B cell (primary cell): ENCODE measurements at regions of chr16 and their contacts with region 1.

Region 1: DNA sequence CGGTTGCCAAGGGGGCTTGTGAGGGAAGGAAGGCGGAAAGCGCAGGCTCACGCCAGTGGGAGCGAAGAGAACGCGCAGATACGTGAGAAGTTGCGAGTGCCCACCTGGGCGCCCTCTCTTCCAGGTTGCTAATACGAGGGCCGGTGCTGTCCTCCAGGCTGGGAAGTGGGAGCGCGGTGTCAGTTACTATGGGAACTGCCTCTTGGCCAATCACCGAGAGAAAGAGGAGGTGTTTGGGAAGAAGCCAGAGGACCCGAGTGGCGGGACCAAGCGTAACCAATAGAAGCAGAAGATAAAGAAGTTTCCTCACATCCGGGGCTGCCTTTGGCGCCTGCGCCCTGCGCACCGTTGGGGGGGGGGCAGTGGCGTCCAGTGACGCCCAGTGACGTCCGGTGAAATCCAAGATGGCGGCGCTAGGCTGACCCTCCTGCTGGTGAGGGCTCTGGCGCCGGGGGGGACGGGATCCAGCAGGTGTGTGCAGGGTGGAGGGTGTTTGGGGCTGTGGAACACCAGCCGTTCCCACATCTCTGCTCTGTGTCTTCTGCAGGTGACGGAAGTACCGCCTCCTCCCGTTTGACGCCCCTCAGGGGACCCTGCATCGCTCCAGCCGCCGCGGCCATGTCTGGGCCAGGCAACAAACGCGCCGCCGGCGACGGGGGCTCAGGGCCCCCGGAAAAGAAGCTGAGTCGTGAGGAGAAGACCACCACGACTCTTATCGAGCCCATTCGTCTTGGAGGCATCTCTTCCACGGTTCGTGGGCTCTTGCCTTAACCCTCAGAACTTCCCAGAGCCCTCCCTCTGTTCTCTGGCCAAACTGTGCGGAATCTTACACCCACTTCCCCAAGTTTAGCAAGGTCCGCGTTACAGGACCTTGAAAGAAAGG is at the starts of genes CFAP119 and RNF40:
- DNase-seq: peak; percentile 95
- ATAC-seq: peak; percentile 92
- H3K4me3 ChIP-seq: peak within 1 kb of the TSS; percentile 82 to 93 (median 90)
- H3K4me3 Mint-ChIP-seq: peak within 1 kb of the TSS; percentile 98
- H3K27ac ChIP-seq: peak within 1 kb of the TSS; percentile 57 to 91
- H3K27ac Mint-ChIP-seq: peak within 1 kb of the TSS; percentile 95
- H3K4me1 ChIP-seq: peaks cover 24 to 37% of the 10 kb centered on the region in 2 donors
- H3K4me1 Mint-ChIP-seq: peaks cover 36% of the 10 kb centered on the region
- H3K27me3 ChIP-seq: no peaks in the 10 kb centered on the region
- H3K27me3 Mint-ChIP-seq: no peaks in the 10 kb centered on the region
- CTCF ChIP-seq: no peak
- total RNA-seq, gene CFAP119: 9.3 and 11.7 TPM in 2 replicates
- total RNA-seq, gene RNF40: 120 and 121 TPM in 2 replicates

Region 2: DNA sequence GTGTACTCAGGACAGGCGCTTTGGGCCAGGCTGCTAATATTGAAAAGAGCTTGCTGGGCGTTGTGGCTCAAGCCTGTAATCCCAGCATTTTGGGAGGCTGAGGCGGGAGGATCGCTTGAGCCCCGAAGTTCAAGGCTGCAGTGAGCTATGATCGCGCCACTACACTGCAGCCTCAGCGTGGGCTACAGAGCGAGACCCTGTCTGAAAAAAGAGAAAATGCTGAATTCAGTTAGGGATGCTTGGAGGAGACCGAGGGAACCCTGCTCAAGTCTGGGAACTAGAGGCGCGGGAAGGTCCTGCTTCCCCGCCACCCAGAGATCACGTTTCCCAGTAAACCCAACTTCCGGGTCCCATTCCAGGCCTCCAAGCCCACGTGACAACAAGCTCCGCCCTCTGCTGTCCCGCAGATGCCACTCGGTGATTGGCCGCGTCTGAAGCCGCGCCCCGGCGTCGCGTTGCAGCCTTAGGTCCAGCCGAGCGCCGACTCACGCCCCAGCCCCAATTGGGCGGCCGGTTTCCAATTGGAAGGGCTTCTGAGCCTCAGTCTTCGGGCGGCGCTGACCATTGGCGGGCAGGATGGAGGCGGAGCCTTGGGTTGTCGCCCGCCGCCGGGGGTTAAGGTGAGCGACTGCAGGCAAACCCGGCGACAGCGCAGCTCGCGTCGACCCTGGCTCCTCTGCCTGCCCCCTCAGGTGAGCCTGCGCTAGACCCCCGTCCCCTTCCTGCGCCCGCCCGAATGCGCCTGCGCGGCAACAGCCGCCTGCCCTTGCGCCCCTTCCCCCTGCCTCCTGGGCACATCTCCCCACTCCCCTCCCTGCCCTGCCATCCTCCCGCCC is 14.2 kb before region 1 on chr16 and contains the start of gene PHKG2:
- CTCF ChIA-PET with region 1: no interaction called
- POLR2A ChIA-PET with region 1: interaction called, 9 read pairs
- intact Hi-C with region 1: loop called (anchors 1 kb)
- DNase-seq: peak; percentile 98
- ATAC-seq: peak; percentile 99
- H3K4me3 ChIP-seq: peak within 1 kb of the TSS; percentile 22 to 84 (median 69)
- H3K4me3 Mint-ChIP-seq: peak within 1 kb of the TSS; percentile 92
- H3K27ac ChIP-seq: peak within 1 kb of the TSS; percentile 45 to 75
- H3K27ac Mint-ChIP-seq: peak within 1 kb of the TSS; percentile 93
- H3K4me1 ChIP-seq: peaks cover 3 to 5% of the 10 kb centered on the region in 2 donors
- H3K4me1 Mint-ChIP-seq: peaks cover 19% of the 10 kb centered on the region
- H3K27me3 ChIP-seq: no peaks in the 10 kb centered on the region
- H3K27me3 Mint-ChIP-seq: no peaks in the 10 kb centered on the region
- CTCF ChIP-seq: no peak
- total RNA-seq, gene PHKG2: 54.1 and 55.7 TPM in 2 replicates

Region 3: DNA sequence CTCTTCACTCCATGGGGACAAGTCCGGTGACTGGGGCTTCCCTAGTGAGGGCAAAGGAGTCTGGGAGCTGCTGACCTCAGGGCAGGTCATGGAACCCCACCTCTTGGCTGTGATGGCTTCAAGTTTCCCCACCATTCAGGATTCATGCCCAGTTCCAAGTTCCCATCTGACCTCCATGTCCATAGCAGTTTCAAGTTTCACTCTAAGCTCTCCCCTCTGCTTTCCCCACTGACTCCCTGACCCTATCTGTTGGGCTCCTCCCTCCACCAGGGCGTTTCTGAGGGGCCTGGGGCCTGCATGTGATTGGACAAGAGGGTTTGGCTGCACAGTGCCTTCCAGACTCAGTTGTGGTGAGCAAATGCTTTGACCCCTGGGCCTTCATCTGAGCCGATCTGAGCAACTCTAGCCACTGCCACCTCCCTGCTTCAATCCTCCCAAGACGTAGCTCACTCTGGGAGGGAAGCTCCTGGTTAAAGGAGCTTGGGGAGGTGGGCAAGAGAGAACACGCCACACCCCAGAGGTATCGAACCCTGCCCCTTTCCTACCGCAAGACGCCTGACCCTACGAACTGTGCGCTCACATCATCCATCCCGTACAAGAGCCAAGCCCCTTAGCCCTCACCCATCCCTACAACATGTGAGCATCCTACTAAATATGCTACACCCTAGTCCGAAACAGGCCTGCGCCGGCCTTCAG is 16.5 kb after region 1 on chr16:
- CTCF ChIA-PET with region 1: no interaction called
- POLR2A ChIA-PET with region 1: no interaction called
- intact Hi-C with region 1: no loop called
- DNase-seq: no peak
- ATAC-seq: no peak
- H3K4me3 ChIP-seq: no peak overlapping the region
- H3K4me3 Mint-ChIP-seq: no peak overlapping the region
- H3K27ac ChIP-seq: no peak overlapping the region
- H3K27ac Mint-ChIP-seq: no peak overlapping the region
- H3K4me1 ChIP-seq: peaks cover 10 to 15% of the 10 kb centered on the region in 2 donors
- H3K4me1 Mint-ChIP-seq: peaks cover 25% of the 10 kb centered on the region
- H3K27me3 ChIP-seq: peaks cover 0 to 19% (median 6%) of the 10 kb centered on the region in 4 experiments
- H3K27me3 Mint-ChIP-seq: peaks cover 15% of the 10 kb centered on the region
- CTCF ChIP-seq: no peak

Region 4: DNA sequence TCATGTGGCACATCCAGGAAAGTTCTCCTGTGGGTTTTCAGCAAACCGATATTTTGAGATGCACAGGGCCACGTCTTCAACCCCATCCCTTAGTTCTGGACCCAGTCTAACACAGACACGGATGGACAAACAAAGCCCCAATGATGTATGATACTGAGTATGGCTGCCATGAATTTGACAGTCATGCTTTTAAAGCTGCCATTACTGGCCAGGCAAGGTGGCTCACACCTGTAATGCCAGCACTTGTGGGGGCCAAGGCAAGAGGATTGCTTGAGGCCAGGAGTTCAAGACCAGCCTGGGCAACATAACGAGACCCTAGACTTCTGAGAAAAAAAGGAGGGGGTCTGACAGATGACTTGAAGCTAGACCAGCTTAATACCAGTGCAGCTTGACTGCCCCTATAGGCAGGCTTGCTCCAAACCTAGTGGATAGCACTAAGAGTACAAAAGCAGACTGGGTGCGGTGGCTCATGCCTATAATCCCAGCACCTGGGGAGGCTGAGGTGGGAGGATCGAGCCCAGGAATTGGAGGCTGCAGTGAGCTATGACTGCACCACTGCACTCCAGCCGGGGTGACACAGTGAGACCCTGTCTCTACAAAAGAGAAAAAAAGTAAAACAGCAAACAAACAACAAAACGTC is 35.6 kb after region 1 on chr16:
- CTCF ChIA-PET with region 1: no interaction called
- POLR2A ChIA-PET with region 1: no interaction called
- intact Hi-C with region 1: no loop called
- DNase-seq: no peak
- ATAC-seq: no peak
- H3K4me3 ChIP-seq: no peak overlapping the region
- H3K4me3 Mint-ChIP-seq: no peak overlapping the region
- H3K27ac ChIP-seq: no peak overlapping the region
- H3K27ac Mint-ChIP-seq: no peak overlapping the region
- H3K4me1 ChIP-seq: no peaks in the 10 kb centered on the region
- H3K4me1 Mint-ChIP-seq: no peaks in the 10 kb centered on the region
- H3K27me3 ChIP-seq: no peaks in the 10 kb centered on the region
- H3K27me3 Mint-ChIP-seq: no peaks in the 10 kb centered on the region
- CTCF ChIP-seq: no peak

Region 5: DNA sequence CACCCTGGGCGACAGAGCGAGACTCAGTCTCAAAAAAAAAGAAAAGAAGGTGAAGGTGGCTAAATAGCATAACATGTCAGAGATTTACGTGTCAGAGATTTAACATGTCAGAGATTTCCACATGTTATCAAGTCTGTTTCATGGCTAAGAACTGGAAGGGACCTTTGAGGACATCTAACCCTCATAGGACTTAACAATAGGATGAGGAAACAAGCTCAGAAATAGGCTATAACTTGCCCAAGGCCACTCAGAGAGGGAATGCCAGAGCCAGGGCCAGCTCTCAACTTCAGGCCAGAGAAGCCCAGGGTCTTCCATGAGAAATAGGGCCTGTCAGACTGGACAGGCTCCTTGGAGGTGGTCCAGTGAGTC is 51.6 kb after region 1 on chr16:
- CTCF ChIA-PET with region 1: interaction called, 3 read pairs
- POLR2A ChIA-PET with region 1: no interaction called
- intact Hi-C with region 1: loop called (anchors 1 kb)
- DNase-seq: no peak
- ATAC-seq: no peak
- H3K4me3 ChIP-seq: peak overlapping the region; percentile 42 to 66 (median 57)
- H3K4me3 Mint-ChIP-seq: peak overlapping the region; percentile 88
- H3K27ac ChIP-seq: peak overlapping the region; percentile 65 to 69
- H3K27ac Mint-ChIP-seq: peak overlapping the region; percentile 85
- H3K4me1 ChIP-seq: peaks cover 9 to 15% of the 10 kb centered on the region in 2 donors
- H3K4me1 Mint-ChIP-seq: peaks cover 16% of the 10 kb centered on the region
- H3K27me3 ChIP-seq: no peaks in the 10 kb centered on the region
- H3K27me3 Mint-ChIP-seq: peaks cover 3% of the 10 kb centered on the region
- CTCF ChIP-seq: no peak

Region 6: GRCh38 chr16:30902029-30902972 is 140.1 kb after region 1 on chr16:
- CTCF ChIA-PET with region 1: interaction called, 3 read pairs
- POLR2A ChIA-PET with region 1: interaction called, 3 read pairs
- intact Hi-C with region 1: loop called (anchors 5 kb)
- DNase-seq: peak; percentile 78
- ATAC-seq: peak; percentile 80
- H3K4me3 ChIP-seq: peak overlapping the region; percentile 45 to 82 (median 62)
- H3K4me3 Mint-ChIP-seq: peak overlapping the region; percentile 98
- H3K27ac ChIP-seq: peak overlapping the region; percentile 57 to 79
- H3K27ac Mint-ChIP-seq: peak overlapping the region; percentile 98
- H3K4me1 ChIP-seq: peaks cover 29 to 40% of the 10 kb centered on the region in 2 donors
- H3K4me1 Mint-ChIP-seq: peaks cover 25% of the 10 kb centered on the region
- H3K27me3 ChIP-seq: no peaks in the 10 kb centered on the region
- H3K27me3 Mint-ChIP-seq: no peaks in the 10 kb centered on the region
- CTCF ChIP-seq: no peak

Region 7: DNA sequence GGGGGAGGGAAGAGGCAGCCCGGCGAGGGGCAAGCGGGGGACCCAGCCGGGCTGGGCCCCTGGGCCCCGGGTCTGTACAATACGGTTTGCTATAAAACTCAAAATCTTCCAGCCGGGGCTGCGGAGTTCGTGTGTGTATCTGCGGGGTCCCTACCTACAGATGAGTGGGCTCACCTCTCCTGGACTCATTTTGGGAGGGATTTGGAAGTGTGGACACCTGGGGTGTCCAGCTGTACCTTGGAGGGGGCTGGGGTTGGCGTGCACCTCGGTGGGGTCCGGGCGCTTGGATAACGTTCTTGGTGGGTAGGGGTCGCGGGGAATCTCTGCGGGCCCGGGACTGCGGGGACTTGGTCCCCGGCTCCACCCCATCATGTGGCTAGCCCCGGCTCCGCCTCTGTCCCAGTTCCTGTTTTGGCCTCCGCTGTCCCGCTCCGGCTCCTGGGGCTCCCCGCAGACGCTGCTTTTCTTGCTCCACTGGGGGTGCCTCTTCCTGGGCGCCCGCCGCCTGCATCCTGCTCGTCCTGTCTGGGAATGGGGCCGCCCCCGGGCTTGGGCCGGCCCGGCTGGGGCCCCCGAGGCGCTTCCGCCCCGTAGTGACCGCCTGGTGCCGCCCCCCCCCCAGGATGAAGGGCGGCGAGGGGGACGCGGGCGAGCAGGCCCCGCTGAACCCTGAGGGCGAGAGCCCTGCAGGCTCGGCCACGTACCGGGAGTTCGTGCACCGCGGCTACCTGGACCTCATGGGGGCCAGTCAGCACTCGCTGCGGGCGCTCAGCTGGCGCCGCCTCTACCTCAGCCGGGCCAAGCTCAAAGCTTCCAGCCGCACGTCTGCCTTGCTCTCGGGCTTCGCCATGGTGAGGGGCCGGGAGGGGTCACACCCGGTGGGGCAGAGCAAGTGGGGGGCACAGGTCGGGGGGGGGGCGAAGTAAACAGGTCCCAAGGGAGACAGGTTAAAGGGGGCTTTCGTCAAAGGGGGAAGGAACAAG is 186.8 kb after region 1 on chr16 and contains the start of gene ORAI3:
- CTCF ChIA-PET with region 1: no interaction called
- POLR2A ChIA-PET with region 1: no interaction called
- intact Hi-C with region 1: loop called (anchors 5 kb)
- DNase-seq: peak; percentile 85
- ATAC-seq: peak; percentile 76
- H3K4me3 ChIP-seq: peak within 1 kb of the TSS; percentile 60 to 93 (median 77)
- H3K4me3 Mint-ChIP-seq: peak within 1 kb of the TSS; percentile 95
- H3K27ac ChIP-seq: peak within 1 kb of the TSS; percentile 61 to 78
- H3K27ac Mint-ChIP-seq: peak within 1 kb of the TSS; percentile 92
- H3K4me1 ChIP-seq: peaks cover 14 to 36% of the 10 kb centered on the region in 2 donors
- H3K4me1 Mint-ChIP-seq: peaks cover 27% of the 10 kb centered on the region
- H3K27me3 ChIP-seq: no peaks in the 10 kb centered on the region
- H3K27me3 Mint-ChIP-seq: no peaks in the 10 kb centered on the region
- CTCF ChIP-seq: no peak
- total RNA-seq, gene ORAI3: 51.8 and 55.8 TPM in 2 replicates